Mammary epithelial cell (primary cell): ENCODE measurements at regions of chr4 and their contacts with region 1.

Region 1: GRCh38 chr4:189355590-189355989 is 585.1 kb upstream of the FRG1 start:
- DNase-seq: no peak
- H3K4me3 ChIP-seq: no peak overlapping the region
- H3K27ac ChIP-seq: no peak overlapping the region
- H3K4me1 ChIP-seq: no peaks in the 10 kb centered on the region
- H3K27me3 ChIP-seq: no peaks in the 10 kb centered on the region
- CTCF ChIP-seq: no peak

Region 2: DNA sequence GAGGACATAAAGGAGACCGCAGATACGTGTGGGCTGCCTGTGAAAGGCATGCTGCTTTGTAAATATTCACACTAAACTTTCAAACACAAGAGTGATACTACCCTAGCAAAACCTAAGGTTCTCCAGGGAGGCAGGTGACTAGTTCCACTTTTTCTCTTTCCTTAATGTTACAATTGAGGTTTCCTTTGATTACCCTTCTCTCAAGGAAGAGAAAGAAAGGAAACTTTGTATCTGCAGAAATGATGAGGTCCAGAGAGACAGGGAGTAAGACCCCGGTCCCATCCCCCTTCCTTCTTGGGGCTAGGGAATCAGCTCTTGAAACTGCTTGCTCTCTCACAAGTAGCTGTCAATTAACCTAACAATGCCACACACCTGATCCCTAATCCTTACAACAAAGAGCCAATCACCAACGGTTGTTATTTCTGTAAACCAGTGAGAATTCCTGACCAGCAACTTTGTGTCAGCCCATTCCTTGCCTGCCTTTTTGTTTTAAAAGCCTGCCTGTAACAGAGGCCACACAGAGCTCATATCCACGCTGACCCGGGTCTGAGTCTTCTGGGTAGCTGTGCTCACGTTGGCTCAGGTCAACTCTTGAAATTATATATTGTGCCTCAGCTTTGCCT is 169.7 kb before region 1 on chr4:
- CTCF ChIA-PET with region 1: no interaction called
- dilution Hi-C with region 1: no loop called
- in situ Hi-C with region 1: no loop called
- intact Hi-C with region 1: no loop called
- DNase-seq: peak; percentile 47
- H3K4me3 ChIP-seq: no peak overlapping the region
- H3K27ac ChIP-seq: no peak overlapping the region
- H3K4me1 ChIP-seq: no peaks in the 10 kb centered on the region
- H3K27me3 ChIP-seq: no peaks in the 10 kb centered on the region
- CTCF ChIP-seq: no peak

Region 3: GRCh38 chr4:189265515-189265914 is 90.1 kb before region 1 on chr4:
- CTCF ChIA-PET with region 1: no interaction called
- dilution Hi-C with region 1: loop called (anchors 5 kb)
- in situ Hi-C with region 1: no loop called
- intact Hi-C with region 1: no loop called
- DNase-seq: no peak
- H3K4me3 ChIP-seq: no peak overlapping the region
- H3K27ac ChIP-seq: no peak overlapping the region
- H3K4me1 ChIP-seq: no peaks in the 10 kb centered on the region
- H3K27me3 ChIP-seq: no peaks in the 10 kb centered on the region
- CTCF ChIP-seq: no peak

Region 4: GRCh38 chr4:189815404-189816192 is 460.0 kb after region 1 on chr4:
- CTCF ChIA-PET with region 1: no interaction called
- dilution Hi-C with region 1: no loop called
- in situ Hi-C with region 1: no loop called
- intact Hi-C with region 1: no loop called
- DNase-seq: no peak
- H3K4me3 ChIP-seq: no peak overlapping the region
- H3K27ac ChIP-seq: no peak overlapping the region
- H3K4me1 ChIP-seq: no peaks in the 10 kb centered on the region
- H3K27me3 ChIP-seq: no peaks in the 10 kb centered on the region
- CTCF ChIP-seq: no peak